WTC11 (cell line): ENCODE measurements at regions of chr3 and their contacts with region 1.

Region 1: GRCh38 chr3:45507820-45508317 is 86.7 kb upstream of the LIMD1 start:
- DNase-seq: peak; percentile 60
- ATAC-seq: peak; percentile 66
- H3K4me3 Mint-ChIP-seq: no peak overlapping the region
- H3K27ac Mint-ChIP-seq: no peak overlapping the region
- H3K4me1 Mint-ChIP-seq: 0 out of 2 replicates have a peak, but pooled peaks cover 3% of the 10 kb centered on the region
- H3K27me3 Mint-ChIP-seq: no peaks in the 10 kb centered on the region
- CTCF ChIP-seq: 0 out of 2 replicates have a peak, but pooled peaks have one; percentile 13

Region 2: GRCh38 chr3:45224824-45225464 is 282.9 kb before region 1 on chr3:
- CTCF ChIA-PET with region 1: interaction called, 80 read pairs
- POLR2A ChIA-PET with region 1: no interaction called
- DNase-seq: peak; percentile 81
- ATAC-seq: peak; percentile 73
- H3K4me3 Mint-ChIP-seq: peak overlapping the region; percentile 91
- H3K27ac Mint-ChIP-seq: no peak overlapping the region
- H3K4me1 Mint-ChIP-seq: peaks cover 34% of the 10 kb centered on the region
- H3K27me3 Mint-ChIP-seq: peaks cover 33% of the 10 kb centered on the region
- CTCF ChIP-seq: peak; percentile 17; the same call in 1 of the 2 replicates